AG04449 (cell line): ENCODE measurements at regions of chr1 and their contacts with region 1.

Region 1: DNA sequence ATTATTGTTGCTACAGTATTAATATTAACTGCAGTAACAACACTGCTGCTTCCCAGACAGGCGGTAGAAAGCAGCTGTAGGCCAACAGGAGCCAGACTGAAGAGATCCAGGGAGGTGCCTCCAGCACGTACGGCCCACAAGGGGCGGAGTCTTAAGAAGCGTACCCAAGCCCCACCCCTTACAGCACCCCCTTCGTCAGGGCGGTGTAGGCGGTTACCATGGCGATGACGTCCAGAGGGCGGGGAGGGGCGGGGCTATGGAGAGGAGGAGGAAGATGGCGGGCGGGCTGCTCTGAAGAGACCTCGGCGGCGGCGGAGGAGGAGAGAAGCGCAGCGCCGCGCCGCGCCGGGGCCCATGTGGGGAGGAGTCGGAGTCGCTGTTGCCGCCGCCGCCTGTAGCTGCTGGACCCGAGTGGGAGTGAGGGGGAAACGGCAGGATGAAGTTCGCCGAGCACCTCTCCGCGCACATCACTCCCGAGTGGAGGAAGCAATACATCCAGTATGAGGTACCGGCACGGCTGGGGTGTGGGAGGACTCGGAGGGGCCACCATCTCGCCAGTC is at the start of gene XPR1:
- DNase-seq: peak; percentile 94
- H3K4me3 ChIP-seq: peak within 1 kb of the TSS; percentile 96
- CTCF ChIP-seq: peak; percentile 35

Region 2: DNA sequence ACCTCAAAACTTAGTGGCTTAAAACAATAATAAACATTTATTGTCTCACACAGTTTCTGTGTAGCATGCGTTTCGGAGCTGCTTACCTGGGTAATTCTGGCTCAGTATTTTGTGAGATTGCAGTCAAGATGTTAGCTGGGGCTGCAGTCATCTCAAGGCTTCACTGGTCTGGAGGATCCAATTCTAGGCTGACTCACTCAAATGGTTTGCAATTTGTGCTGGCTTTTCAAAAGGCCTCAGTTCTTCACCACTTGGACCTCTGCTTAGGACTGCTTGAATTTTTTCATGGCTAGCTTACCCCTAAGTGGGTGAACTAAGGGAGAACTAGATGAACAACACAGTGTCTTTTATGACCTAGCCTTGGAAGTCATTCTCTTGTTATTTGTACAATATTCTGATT is 20.9 kb after region 1 on chr1:
- CTCF ChIA-PET with region 1: interaction called, 12 read pairs
- POLR2A ChIA-PET with region 1: no interaction called
- DNase-seq: no peak
- H3K4me3 ChIP-seq: no peak overlapping the region
- CTCF ChIP-seq: no peak

Region 3: DNA sequence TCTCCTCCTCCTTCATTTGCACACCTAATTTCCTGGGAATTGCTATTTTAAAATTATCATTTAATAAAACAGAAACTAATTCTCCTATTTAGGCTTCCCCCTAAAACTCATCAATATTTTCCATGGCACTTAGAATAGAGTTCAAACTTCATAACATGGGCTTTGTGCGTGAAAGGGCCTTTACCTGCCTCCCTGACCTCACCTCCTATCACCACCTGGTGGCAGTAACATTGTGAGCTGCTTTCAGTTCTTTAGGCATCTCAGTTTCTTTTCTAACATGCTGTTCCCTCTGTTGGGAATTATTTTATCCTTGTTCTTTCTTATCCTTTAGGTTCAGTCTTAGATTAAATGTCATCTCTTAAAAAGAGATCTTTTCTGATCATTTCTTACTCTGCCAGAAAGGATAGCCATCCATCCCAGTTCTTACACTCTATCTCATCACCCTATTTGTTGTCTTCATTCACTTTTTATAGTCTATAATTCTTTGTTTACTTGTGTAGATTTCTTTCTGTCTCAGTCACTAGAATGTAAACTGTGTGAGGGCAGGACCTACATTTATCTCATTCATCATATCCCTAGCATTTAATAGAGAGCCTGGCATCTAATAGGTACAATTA is 147.0 kb after region 1 on chr1:
- CTCF ChIA-PET with region 1: no interaction called
- POLR2A ChIA-PET with region 1: no interaction called
- DNase-seq: no peak
- H3K4me3 ChIP-seq: no peak overlapping the region
- CTCF ChIP-seq: no peak